ENCODE measurements at regions of chr5 and their contacts with region 1.

Region 1: DNA sequence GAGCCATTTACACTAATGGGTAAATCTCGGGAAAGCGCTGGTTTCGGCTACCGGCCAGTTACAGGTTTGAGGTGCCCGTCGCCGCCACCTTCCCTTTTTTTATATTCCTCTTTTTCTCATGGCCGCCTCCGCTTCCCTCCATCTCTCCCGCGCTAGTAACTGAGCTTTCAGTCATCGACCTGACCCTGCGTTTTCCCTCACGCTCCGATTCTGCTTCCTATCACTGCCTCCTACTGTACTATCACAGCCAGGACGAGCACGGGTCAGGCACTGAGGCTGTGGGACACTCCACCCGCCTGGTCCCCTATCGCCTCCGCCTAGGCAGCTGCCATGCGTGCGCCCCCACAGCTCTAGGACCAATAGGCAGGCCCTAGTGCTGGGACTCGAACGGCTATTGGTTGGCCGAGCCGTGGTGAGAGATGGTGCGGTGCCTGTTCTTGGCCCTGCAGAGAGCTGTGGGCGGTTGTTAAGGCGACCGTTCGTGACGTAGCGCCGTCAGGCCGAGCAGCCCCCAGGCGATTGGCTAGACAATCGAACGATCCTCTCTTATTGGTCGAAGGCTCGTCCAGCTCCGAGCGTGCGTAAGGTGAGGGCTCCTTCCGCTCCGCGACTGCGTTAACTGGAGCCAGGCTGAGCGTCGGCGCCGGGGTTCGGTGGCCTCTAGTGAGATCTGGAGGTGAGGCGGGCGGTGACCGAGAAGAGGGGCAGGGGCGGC is at the start of gene HMGCR:
- DNase-seq: peak; percentile 99 to 100 (median 99)

Region 2: GRCh38 chr5:75236322-75237316 is 100.2 kb before region 1 on chr5 and contains the start of gene ANKRD31:
- intact Hi-C with region 1: loop called (anchors 2 kb)
- DNase-seq: peak; percentile 68 to 98 (median 80)

Region 3: GRCh38 chr5:75511435-75512384 is 174.9 kb after region 1 on chr5 and contains the starts of genes CERT1 and POLK:
- intact Hi-C with region 1: loop called (anchors 1 kb)
- DNase-seq: peak; percentile 98 to 100 (median 99)

Region 4: GRCh38 chr5:75681125-75681830 is 344.5 kb after region 1 on chr5:
- intact Hi-C with region 1: loop called (anchors 10 kb)
- DNase-seq: no peak

Measured in posterior cingulate gyrus (tissue), 11 donors.